Uterus (tissue), 4 donors: ENCODE measurements at regions of chr20 and their contacts with region 1.

Region 1: DNA sequence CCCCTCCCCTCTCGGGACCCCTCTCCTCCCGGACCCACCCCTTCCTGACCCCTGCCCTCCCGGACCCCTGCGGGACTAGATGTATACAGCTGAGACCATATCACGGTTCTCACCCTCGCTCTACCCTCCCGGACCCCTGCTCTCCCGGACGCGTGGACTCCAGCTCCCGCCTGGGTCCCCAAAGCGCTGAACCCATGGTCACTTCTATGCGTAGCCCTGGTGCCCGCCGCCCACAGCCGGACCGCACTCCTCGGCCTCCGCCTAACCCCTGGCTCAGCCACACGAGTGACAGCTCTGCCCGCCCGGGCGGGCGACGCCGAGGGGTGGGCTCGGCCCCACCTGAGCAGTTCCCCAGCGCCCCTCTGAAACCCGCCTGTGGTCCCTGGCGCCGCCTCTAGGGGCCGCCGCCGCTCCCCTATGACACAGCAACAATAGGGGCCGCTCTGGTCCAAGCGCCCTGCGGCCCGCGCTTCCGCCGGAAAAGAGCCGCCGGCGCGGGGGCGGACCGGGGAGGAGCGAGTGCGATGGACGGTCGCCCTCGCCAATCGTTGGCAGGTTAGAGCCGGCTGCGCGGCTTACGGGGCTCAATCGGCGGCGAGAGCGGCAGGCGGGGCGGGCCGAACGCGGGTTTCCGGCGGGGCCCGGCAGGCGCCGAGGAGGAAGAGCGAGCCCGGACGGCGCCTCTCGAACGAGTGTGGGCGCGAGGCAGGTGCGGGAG is at the start of gene ADRM1:
- DNase-seq: peak; percentile 93 to 97
- H3K4me3 ChIP-seq: peak within 1 kb of the TSS; percentile 57 to 96
- H3K27ac ChIP-seq: peak within 1 kb of the TSS; percentile 94 to 100
- H3K4me1 ChIP-seq: peaks cover 0 to 12% of the 10 kb centered on the region in 2 donors
- H3K27me3 ChIP-seq: no peaks in the 10 kb centered on the region
- CTCF ChIP-seq: peak; percentile 96 to 99 (median 97)
- POLR2A ChIP-seq: peak; percentile 60 to 62
- total RNA-seq, gene ADRM1: 42.9 to 82.7 (median 60.9) TPM

Region 2: GRCh38 chr20:62376112-62377063 is 73.9 kb after region 1 on chr20:
- intact Hi-C with region 1: loop called (anchors 5 kb)
- DNase-seq: peak; percentile 52 to 55
- H3K4me3 ChIP-seq: no peak overlapping the region
- H3K27ac ChIP-seq: peak overlapping the region; percentile 51 to 71
- H3K4me1 ChIP-seq: peaks cover 0 to 12% of the 10 kb centered on the region in 2 donors
- H3K27me3 ChIP-seq: no peaks in the 10 kb centered on the region
- CTCF ChIP-seq: peak; percentile 44 to 75 (median 70)
- POLR2A ChIP-seq: no peak